ENCODE measurements at regions of chr3 and their contacts with region 1.

Region 1: DNA sequence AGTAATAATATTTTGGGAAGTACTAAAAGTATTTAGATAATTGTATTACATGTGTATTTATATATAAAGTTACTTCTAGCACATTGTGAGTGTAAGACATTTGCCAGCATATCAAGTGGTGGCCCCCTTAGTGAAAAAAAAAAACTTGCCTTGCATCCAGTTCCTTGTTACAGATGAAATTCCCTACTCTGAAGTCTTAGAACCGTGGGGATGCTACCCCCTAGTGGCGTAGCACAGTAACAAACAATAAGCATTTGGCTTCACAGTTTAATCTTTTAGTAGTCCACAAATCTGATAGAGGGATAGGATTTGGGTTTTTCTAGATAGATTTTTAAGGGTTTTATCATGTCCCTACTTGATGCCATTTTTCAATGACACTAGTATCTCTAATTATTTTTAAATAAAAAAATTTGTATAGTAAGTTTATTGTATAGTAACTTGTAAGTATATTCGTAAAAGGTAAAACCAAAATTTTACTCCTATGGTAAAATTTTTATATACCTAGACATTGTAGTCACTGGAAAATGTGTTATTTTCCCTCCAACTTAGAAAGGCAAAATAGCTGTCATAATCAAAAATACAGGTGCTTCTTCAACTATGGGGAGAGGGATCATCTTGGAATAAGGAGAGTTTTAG is 14.3 kb downstream of the SMC4 start:
- DNase-seq: peak; percentile 43 to 85
- ATAC-seq: peak; percentile 90 to 96 (median 93)
- H3K4me3 ChIP-seq: no peak overlapping the region
- H3K4me3 Mint-ChIP-seq: no peak overlapping the region
- H3K27ac ChIP-seq: no peak overlapping the region
- H3K27ac Mint-ChIP-seq: no peak overlapping the region
- H3K4me1 ChIP-seq: no peaks in the 10 kb centered on the region
- H3K4me1 Mint-ChIP-seq: no peaks in the 10 kb centered on the region
- H3K27me3 ChIP-seq: no peaks in the 10 kb centered on the region
- H3K27me3 Mint-ChIP-seq: no peaks in the 10 kb centered on the region
- CTCF ChIP-seq: peak; percentile 87

Region 2: GRCh38 chr3:159884661-159885402 is 528.9 kb before region 1 on chr3:
- intact Hi-C with region 1: loop called (anchors 2 kb)
- DNase-seq: peak in 1 of 2 donors; percentile 41
- ATAC-seq: peak in 1 of 3 donors; percentile 40
- H3K4me3 ChIP-seq: no peak overlapping the region
- H3K4me3 Mint-ChIP-seq: no peak overlapping the region
- H3K27ac ChIP-seq: no peak overlapping the region
- H3K27ac Mint-ChIP-seq: no peak overlapping the region
- H3K4me1 ChIP-seq: no peaks in the 10 kb centered on the region
- H3K4me1 Mint-ChIP-seq: no peaks in the 10 kb centered on the region
- H3K27me3 ChIP-seq: no peaks in the 10 kb centered on the region
- H3K27me3 Mint-ChIP-seq: peaks cover 0 to 5% of the 10 kb centered on the region in 2 donors
- CTCF ChIP-seq: peak; percentile 31

Region 3: GRCh38 chr3:160027541-160028195 is 386.1 kb before region 1 on chr3:
- intact Hi-C with region 1: loop called (anchors 1 kb)
- DNase-seq: no peak
- ATAC-seq: peak in 1 of 3 donors; percentile 39
- H3K4me3 ChIP-seq: no peak overlapping the region
- H3K4me3 Mint-ChIP-seq: no peak overlapping the region
- H3K27ac ChIP-seq: no peak overlapping the region
- H3K27ac Mint-ChIP-seq: no peak overlapping the region
- H3K4me1 ChIP-seq: no peaks in the 10 kb centered on the region
- H3K4me1 Mint-ChIP-seq: peaks cover 0 to 5% of the 10 kb centered on the region in 2 donors
- H3K27me3 ChIP-seq: no peaks in the 10 kb centered on the region
- H3K27me3 Mint-ChIP-seq: no peaks in the 10 kb centered on the region
- CTCF ChIP-seq: no peak

Region 4: GRCh38 chr3:160163229-160163878 is 250.4 kb before region 1 on chr3:
- intact Hi-C with region 1: loop called (anchors 5 kb)
- DNase-seq: peak in 1 of 2 donors; percentile 40
- ATAC-seq: no peak
- H3K4me3 ChIP-seq: no peak overlapping the region
- H3K4me3 Mint-ChIP-seq: no peak overlapping the region
- H3K27ac ChIP-seq: no peak overlapping the region
- H3K27ac Mint-ChIP-seq: no peak overlapping the region
- H3K4me1 ChIP-seq: no peaks in the 10 kb centered on the region
- H3K4me1 Mint-ChIP-seq: no peaks in the 10 kb centered on the region
- H3K27me3 ChIP-seq: no peaks in the 10 kb centered on the region
- H3K27me3 Mint-ChIP-seq: peaks cover 0 to 9% of the 10 kb centered on the region in 2 donors
- CTCF ChIP-seq: no peak

Measured in natural killer cell (primary cell).